AG04449 (cell line): ENCODE measurements at regions of chr4 and their contacts with region 1.

Region 1: GRCh38 chr4:139403462-139403861 is 50.5 kb upstream of the RAB33B start:
- DNase-seq: no peak
- H3K4me3 ChIP-seq: no peak overlapping the region
- CTCF ChIP-seq: no peak

Region 2: DNA sequence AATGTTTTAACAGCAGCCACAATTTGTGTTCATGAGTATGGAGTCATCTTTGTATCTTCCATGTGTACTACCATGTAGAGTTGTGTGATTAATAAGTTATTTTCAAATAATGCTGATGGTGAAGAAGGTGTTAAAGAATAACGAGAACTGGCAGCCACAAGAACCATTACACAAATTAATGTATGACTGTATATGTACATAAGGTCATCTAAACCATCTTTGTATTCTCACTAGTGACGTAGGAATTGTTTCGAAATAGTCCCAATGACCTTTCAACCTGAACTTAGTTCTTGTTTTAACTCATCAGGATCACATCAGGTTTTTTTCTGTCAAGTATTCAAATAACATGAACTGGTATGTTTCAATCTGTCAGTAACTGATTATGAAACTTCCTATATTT is 436.1 kb before region 1 on chr4:
- CTCF ChIA-PET with region 1: no interaction called
- POLR2A ChIA-PET with region 1: no interaction called
- DNase-seq: no peak
- H3K4me3 ChIP-seq: no peak overlapping the region
- CTCF ChIP-seq: no peak

Region 3: GRCh38 chr4:139319571-139319970 is 83.9 kb before region 1 on chr4:
- CTCF ChIA-PET with region 1: no interaction called
- POLR2A ChIA-PET with region 1: no interaction called
- DNase-seq: no peak
- H3K4me3 ChIP-seq: no peak overlapping the region
- CTCF ChIP-seq: no peak

Region 4: DNA sequence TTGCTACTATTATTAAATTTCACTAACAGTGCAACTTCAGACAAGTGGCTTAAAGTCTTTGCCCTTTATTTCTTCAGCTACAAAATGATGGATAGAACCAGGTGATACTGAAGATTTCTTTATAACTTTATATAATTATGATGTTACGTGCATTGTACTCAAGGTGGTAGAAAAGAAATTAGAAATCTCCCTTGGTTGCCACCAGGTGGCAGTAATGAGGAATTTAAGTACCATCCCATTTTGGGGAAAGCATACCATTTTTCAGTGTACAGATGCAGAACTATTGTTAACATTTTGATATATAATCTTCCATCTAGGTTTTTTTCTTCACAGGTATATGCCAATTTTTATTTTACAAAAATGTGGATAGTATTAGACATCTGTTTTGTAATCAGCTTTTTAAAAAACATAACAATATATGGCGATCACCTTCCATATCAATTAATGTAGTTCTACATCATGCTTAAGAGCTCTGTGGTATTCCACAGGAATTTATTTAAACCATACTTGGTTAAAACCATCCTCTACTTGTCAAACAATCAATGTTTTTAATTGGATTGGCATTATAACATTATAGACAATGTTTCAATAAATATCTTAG is 12.7 kb after region 1 on chr4:
- CTCF ChIA-PET with region 1: interaction called, 22 read pairs
- POLR2A ChIA-PET with region 1: no interaction called
- DNase-seq: no peak
- H3K4me3 ChIP-seq: no peak overlapping the region
- CTCF ChIP-seq: peak; percentile 38